ENCODE measurements at regions of chr19 and their contacts with region 1.

Region 1: GRCh38 chr19:36128392-36128736 is 11.5 kb upstream of the CAPNS1 start:
- DNase-seq: peak; percentile 83
- H3K4me3 ChIP-seq: peak overlapping the region; percentile 40 to 77 (median 47)
- H3K27ac ChIP-seq: peak overlapping the region; percentile 88 to 97 (median 94)
- H3K4me1 ChIP-seq: peaks cover 4 to 61% (median 42%) of the 10 kb centered on the region in 6 donors
- H3K27me3 ChIP-seq: no peaks in the 10 kb centered on the region
- CTCF ChIP-seq: no peak
- POLR2A ChIP-seq: no peak

Region 2: GRCh38 chr19:36169084-36169760 is 40.9 kb after region 1 on chr19:
- intact Hi-C with region 1: loop called (anchors 5 kb)
- DNase-seq: no peak
- H3K4me3 ChIP-seq: no peak overlapping the region
- H3K27ac ChIP-seq: peak overlapping the region; percentile 27 to 85 (median 72)
- H3K4me1 ChIP-seq: peaks cover 4 to 22% (median 9%) of the 10 kb centered on the region in 6 donors
- H3K27me3 ChIP-seq: no peaks in the 10 kb centered on the region
- CTCF ChIP-seq: no peak
- POLR2A ChIP-seq: no peak

Measured in spleen (tissue), 13 donors.